Breast epithelium (tissue), 4 donors: ENCODE measurements at regions of chr5 and their contacts with region 1.

Region 1: GRCh38 chr5:54401515-54401914 is 54.0 kb upstream of the HSPB3 start:
- DNase-seq: no peak
- H3K4me3 ChIP-seq: no peak overlapping the region
- H3K27ac ChIP-seq: peak overlapping the region in 1 of 2 donors; percentile 46
- H3K4me1 ChIP-seq: no peaks in the 10 kb centered on the region
- H3K27me3 ChIP-seq: no peaks in the 10 kb centered on the region
- CTCF ChIP-seq: no peak
- POLR2A ChIP-seq: no peak

Region 2: GRCh38 chr5:55290991-55291390 is 889.5 kb after region 1 on chr5:
- intact Hi-C with region 1: loop called (anchors 5 kb)
- DNase-seq: no peak
- H3K4me3 ChIP-seq: no peak overlapping the region
- H3K27ac ChIP-seq: no peak overlapping the region
- H3K4me1 ChIP-seq: no peaks in the 10 kb centered on the region
- H3K27me3 ChIP-seq: no peaks in the 10 kb centered on the region
- CTCF ChIP-seq: no peak
- POLR2A ChIP-seq: no peak